Breast epithelium (tissue), 4 donors: ENCODE measurements at regions of chr21 and their contacts with region 1.

Region 1: DNA sequence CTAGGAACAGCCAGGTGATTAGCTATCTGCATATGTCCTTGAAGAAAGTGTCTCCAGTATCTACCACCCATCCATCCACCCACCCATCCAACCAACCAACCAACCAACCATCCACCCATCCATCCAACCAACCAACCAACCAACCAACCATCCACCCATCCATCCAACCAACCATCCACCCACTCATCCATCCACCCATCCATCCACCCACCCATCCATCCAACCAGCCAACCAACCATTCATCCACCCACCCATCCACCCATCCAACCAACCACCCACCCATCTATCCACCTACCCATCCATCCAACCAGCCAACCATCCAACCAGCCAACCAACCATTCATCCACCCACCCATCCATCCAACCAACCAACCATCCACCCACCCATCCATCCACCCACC is 12.1 kb downstream of the C21orf58 start:
- DNase-seq: no peak
- H3K4me3 ChIP-seq: no peak overlapping the region
- H3K27ac ChIP-seq: no peak overlapping the region
- H3K4me1 ChIP-seq: no peaks in the 10 kb centered on the region
- H3K27me3 ChIP-seq: no peaks in the 10 kb centered on the region
- CTCF ChIP-seq: no peak
- POLR2A ChIP-seq: no peak

Region 2: DNA sequence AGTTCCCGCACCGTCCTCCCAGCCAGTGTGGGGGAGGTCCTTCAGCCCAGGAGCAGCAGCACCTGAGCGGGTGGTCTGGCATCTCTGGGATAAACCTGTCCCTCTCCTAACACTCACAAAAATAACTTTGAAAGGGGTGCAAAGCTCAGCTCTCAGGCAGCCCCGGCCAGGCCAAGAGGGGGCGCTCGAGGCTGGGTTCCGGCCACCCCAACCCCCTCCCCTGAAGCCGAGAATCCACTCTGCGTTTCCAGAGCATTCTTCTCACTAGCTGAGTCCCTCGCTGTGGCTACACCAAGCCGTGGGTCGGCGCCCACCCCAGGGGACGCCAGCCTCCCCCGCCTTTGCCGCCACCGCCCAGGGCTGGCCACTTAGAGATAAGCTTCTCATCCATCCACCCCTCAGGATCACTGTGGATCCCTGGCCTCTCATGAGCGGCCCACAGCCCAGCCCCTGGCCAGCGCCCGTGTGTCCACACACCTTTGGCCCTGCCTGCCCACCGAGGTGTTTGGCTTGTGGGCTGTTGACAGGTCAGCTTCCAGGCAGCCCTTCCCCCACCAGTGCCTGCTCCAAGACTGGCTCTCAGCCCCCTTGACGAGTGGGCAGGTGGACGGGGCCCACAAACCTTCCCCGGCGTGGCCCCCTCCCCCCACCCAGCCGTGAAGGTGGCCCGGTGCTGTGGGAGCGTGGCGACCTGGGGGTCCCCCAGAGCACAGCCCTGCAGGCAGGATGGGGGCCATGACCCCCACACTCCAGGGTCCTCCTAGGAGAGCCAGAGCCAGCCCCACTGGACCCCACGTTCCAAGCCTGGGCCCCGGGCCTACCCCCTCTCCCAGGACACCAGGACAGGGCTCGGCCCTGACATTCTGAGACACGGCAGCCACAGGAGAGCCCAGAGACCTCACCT is 158.1 kb before region 1 on chr21:
- intact Hi-C with region 1: no loop called
- DNase-seq: peak in 1 of 2 donors; percentile 72
- H3K4me3 ChIP-seq: peak overlapping the region in 2 of 3 donors; percentile 35 to 56
- H3K27ac ChIP-seq: no peak overlapping the region
- H3K4me1 ChIP-seq: no peaks in the 10 kb centered on the region
- H3K27me3 ChIP-seq: no peaks in the 10 kb centered on the region
- CTCF ChIP-seq: peak; percentile 33 to 71 (median 66)
- POLR2A ChIP-seq: no peak

Region 3: DNA sequence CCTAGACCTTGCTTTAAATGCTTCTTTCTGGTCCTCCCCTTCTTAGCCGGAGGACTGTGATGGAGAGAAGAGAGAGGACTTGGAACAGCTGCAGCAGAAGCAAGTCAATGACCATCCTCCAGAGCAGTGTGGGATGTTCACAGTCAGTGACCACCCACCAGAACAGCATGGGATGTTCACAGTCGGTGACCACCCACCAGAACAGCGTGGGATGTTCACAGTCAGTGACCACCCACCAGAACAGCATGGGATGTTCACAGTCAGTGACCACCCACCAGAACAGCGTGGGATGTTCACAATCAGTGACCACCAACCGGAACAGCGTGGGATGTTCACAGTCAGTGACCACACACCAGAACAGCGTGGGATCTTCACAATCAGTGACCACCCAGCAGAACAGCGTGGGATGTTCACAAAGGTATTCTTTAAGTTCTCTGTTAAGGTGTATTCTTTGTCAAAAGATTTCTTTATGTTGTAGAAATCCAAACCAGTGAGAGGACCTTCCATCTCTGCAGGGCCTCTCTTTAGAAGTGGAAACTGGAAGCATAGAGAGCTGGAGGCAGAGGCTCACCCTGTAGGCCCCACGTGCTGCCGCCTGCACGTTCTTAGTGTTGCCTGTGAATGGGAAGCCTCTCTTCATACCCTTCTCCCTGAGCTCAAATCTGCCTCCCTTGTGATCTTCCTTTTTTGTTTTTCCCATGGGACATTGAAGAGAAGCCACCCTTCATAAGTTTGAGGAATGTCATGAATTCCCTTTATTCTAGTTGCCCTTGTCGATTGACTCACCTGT is 23.0 kb after region 1 on chr21:
- intact Hi-C with region 1: no loop called
- DNase-seq: no peak
- H3K4me3 ChIP-seq: no peak overlapping the region
- H3K27ac ChIP-seq: no peak overlapping the region
- H3K4me1 ChIP-seq: no peaks in the 10 kb centered on the region
- H3K27me3 ChIP-seq: no peaks in the 10 kb centered on the region
- CTCF ChIP-seq: no peak
- POLR2A ChIP-seq: no peak

Region 4: GRCh38 chr21:46347791-46348381 is 36.3 kb after region 1 on chr21:
- intact Hi-C with region 1: loop called (anchors 2 kb)
- DNase-seq: no peak
- H3K4me3 ChIP-seq: no peak overlapping the region
- H3K27ac ChIP-seq: no peak overlapping the region
- H3K4me1 ChIP-seq: no peaks in the 10 kb centered on the region
- H3K27me3 ChIP-seq: no peaks in the 10 kb centered on the region
- CTCF ChIP-seq: no peak
- POLR2A ChIP-seq: no peak

Region 5: GRCh38 chr21:46385846-46386733 is 74.5 kb after region 1 on chr21:
- intact Hi-C with region 1: no loop called
- DNase-seq: no peak
- H3K4me3 ChIP-seq: no peak overlapping the region
- H3K27ac ChIP-seq: no peak overlapping the region
- H3K4me1 ChIP-seq: no peaks in the 10 kb centered on the region
- H3K27me3 ChIP-seq: no peaks in the 10 kb centered on the region
- CTCF ChIP-seq: no peak
- POLR2A ChIP-seq: no peak